CD8-positive, alpha-beta T cell (primary cell): ENCODE measurements at regions of chr17 and their contacts with region 1.

Region 1: GRCh38 chr17:40139566-40140058 is 725 bp upstream of the CASC3 start:
- DNase-seq: peak in 2 of 9 experiments; percentile 3 to 24
- ATAC-seq: peak; percentile 24
- H3K4me3 ChIP-seq: peak overlapping the region; percentile 57 to 71
- H3K4me3 Mint-ChIP-seq: peak overlapping the region; percentile 89
- H3K27ac ChIP-seq: peak overlapping the region; percentile 93 to 94
- H3K27ac Mint-ChIP-seq: peak overlapping the region; percentile 99
- H3K4me1 ChIP-seq: peaks cover 24% of the 10 kb centered on the region
- H3K4me1 Mint-ChIP-seq: peaks cover 42% of the 10 kb centered on the region
- H3K27me3 ChIP-seq: no peaks in the 10 kb centered on the region
- H3K27me3 Mint-ChIP-seq: no peaks in the 10 kb centered on the region
- CTCF ChIP-seq: no peak

Region 2: DNA sequence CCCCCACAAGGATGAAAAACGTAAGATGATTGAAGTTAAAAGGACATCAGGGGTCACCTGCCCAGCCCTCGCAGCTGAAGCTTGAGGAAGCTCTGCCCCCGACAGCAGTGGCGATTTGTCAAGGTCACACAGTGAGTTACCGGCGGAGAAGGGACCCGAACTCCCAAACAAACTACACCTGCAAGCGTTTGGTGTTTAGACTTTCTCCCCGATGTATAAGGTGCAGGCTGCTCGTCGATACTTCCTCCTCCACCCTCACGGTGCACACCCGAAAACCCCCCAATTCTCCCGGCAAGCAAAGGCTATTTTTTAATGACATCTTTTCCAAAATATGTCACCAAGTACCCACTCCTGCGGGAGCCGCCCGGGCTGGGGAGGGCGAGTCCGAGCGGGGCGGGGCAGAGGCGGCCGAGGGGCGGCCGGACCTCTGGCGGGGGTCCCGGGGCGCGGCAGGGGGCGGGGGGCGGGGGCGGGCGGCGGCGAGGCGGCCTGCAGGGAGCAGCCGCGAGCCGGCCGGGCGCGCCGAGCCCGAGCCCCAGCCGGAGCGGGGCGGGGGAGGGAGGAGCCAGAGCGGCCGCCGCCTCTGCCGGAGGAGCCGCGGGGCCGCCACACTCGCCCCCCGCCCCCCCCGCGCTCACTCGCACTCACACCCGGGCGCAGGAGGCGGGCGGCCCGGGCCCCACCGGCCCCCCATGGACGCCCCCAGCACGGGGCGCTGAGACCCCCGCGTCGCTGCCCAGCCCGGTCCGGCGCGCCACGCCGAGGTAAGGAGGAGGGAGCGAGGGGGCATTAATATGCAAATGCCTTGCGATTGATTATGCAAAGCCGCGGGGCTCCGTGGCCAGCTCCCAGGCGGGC is 77.1 kb before region 1 on chr17 and contains the start of gene THRA:
- CTCF ChIA-PET with region 1: no interaction called
- POLR2A ChIA-PET with region 1: interaction called, 8 read pairs
- intact Hi-C with region 1: loop called in 1 of 2 experiments (anchors 2 kb)
- DNase-seq: peak; percentile 47 to 88 (median 71)
- ATAC-seq: peak; percentile 90
- H3K4me3 ChIP-seq: peak within 1 kb of the TSS; percentile 84 to 97
- H3K4me3 Mint-ChIP-seq: peak within 1 kb of the TSS; percentile 91
- H3K27ac ChIP-seq: peak within 1 kb of the TSS; percentile 49 to 64
- H3K27ac Mint-ChIP-seq: peak within 1 kb of the TSS; percentile 85
- H3K4me1 ChIP-seq: peaks cover 48% of the 10 kb centered on the region
- H3K4me1 Mint-ChIP-seq: peaks cover 45% of the 10 kb centered on the region
- H3K27me3 ChIP-seq: no peaks in the 10 kb centered on the region
- H3K27me3 Mint-ChIP-seq: no peaks in the 10 kb centered on the region
- CTCF ChIP-seq: no peak
- total RNA-seq, gene THRA: 34.6 to 35.7 TPM

Region 3: GRCh38 chr17:40098846-40099618 is 40.6 kb before region 1 on chr17:
- CTCF ChIA-PET with region 1: interaction called, 6 read pairs
- POLR2A ChIA-PET with region 1: interaction called, 21 read pairs
- intact Hi-C with region 1: loop called (anchors 1 kb)
- DNase-seq: peak; percentile 97 to 100 (median 99)
- ATAC-seq: peak; percentile 64
- H3K4me3 ChIP-seq: peak overlapping the region; percentile 75 to 90
- H3K4me3 Mint-ChIP-seq: peak overlapping the region; percentile 94
- H3K27ac ChIP-seq: peak overlapping the region; percentile 79 to 98
- H3K27ac Mint-ChIP-seq: peak overlapping the region; percentile 95
- H3K4me1 ChIP-seq: peaks cover 80% of the 10 kb centered on the region
- H3K4me1 Mint-ChIP-seq: peaks cover 88% of the 10 kb centered on the region
- H3K27me3 ChIP-seq: no peaks in the 10 kb centered on the region
- H3K27me3 Mint-ChIP-seq: no peaks in the 10 kb centered on the region
- CTCF ChIP-seq: no peak

Region 4: GRCh38 chr17:40121181-40122135 is 18.2 kb before region 1 on chr17 and contains the start of gene MSL1:
- CTCF ChIA-PET with region 1: interaction called, 20 read pairs
- POLR2A ChIA-PET with region 1: interaction called, 38 read pairs
- intact Hi-C with region 1: loop called (anchors 1 kb)
- DNase-seq: peak; percentile 69 to 92 (median 85)
- ATAC-seq: peak; percentile 65
- H3K4me3 ChIP-seq: peak within 1 kb of the TSS; percentile 75 to 93
- H3K4me3 Mint-ChIP-seq: peak within 1 kb of the TSS; percentile 81
- H3K27ac ChIP-seq: peak within 1 kb of the TSS; percentile 40 to 71
- H3K27ac Mint-ChIP-seq: peak within 1 kb of the TSS; percentile 83
- H3K4me1 ChIP-seq: peaks cover 14% of the 10 kb centered on the region
- H3K4me1 Mint-ChIP-seq: peaks cover 44% of the 10 kb centered on the region
- H3K27me3 ChIP-seq: no peaks in the 10 kb centered on the region
- H3K27me3 Mint-ChIP-seq: no peaks in the 10 kb centered on the region
- CTCF ChIP-seq: no peak
- total RNA-seq, gene MSL1: 43.8 to 46.6 TPM

Region 5: GRCh38 chr17:40151414-40151963 is 11.9 kb after region 1 on chr17:
- CTCF ChIA-PET with region 1: interaction called, 3 read pairs
- POLR2A ChIA-PET with region 1: interaction called, 11 read pairs
- intact Hi-C with region 1: no loop called
- DNase-seq: no peak
- ATAC-seq: no peak
- H3K4me3 ChIP-seq: no peak overlapping the region
- H3K4me3 Mint-ChIP-seq: no peak overlapping the region
- H3K27ac ChIP-seq: no peak overlapping the region
- H3K27ac Mint-ChIP-seq: no peak overlapping the region
- H3K4me1 ChIP-seq: peaks cover 14% of the 10 kb centered on the region
- H3K4me1 Mint-ChIP-seq: peaks cover 58% of the 10 kb centered on the region
- H3K27me3 ChIP-seq: no peaks in the 10 kb centered on the region
- H3K27me3 Mint-ChIP-seq: no peaks in the 10 kb centered on the region
- CTCF ChIP-seq: no peak

Region 6: GRCh38 chr17:40177275-40177874 is 37.8 kb after region 1 on chr17 and contains the start of gene RAPGEFL1:
- CTCF ChIA-PET with region 1: interaction called, 3 read pairs
- POLR2A ChIA-PET with region 1: no interaction called
- intact Hi-C with region 1: loop called (anchors 1 to 5 kb)
- DNase-seq: peak; percentile 70 to 90 (median 81)
- ATAC-seq: peak; percentile 99
- H3K4me3 ChIP-seq: peak within 1 kb of the TSS; percentile 53 to 54
- H3K4me3 Mint-ChIP-seq: peak within 1 kb of the TSS; percentile 72
- H3K27ac ChIP-seq: no peak within 1 kb of the TSS
- H3K27ac Mint-ChIP-seq: no peak within 1 kb of the TSS
- H3K4me1 ChIP-seq: peaks cover 12% of the 10 kb centered on the region
- H3K4me1 Mint-ChIP-seq: peaks cover 11% of the 10 kb centered on the region
- H3K27me3 ChIP-seq: no peaks in the 10 kb centered on the region
- H3K27me3 Mint-ChIP-seq: no peaks in the 10 kb centered on the region
- CTCF ChIP-seq: no peak
- total RNA-seq, gene RAPGEFL1: 8.8 to 9.2 TPM

Region 7: GRCh38 chr17:40219073-40219860 is 79.7 kb after region 1 on chr17 and contains the start of gene WIPF2:
- CTCF ChIA-PET with region 1: interaction called, 3 read pairs
- POLR2A ChIA-PET with region 1: interaction called, 5 read pairs
- intact Hi-C with region 1: loop called in 1 of 2 experiments (anchors 1 kb)
- DNase-seq: peak; percentile 92 to 98 (median 96)
- ATAC-seq: peak; percentile 90
- H3K4me3 ChIP-seq: peak within 1 kb of the TSS; percentile 83 to 87
- H3K4me3 Mint-ChIP-seq: peak within 1 kb of the TSS; percentile 95
- H3K27ac ChIP-seq: peak within 1 kb of the TSS; percentile 99
- H3K27ac Mint-ChIP-seq: peak within 1 kb of the TSS; percentile 100
- H3K4me1 ChIP-seq: peaks cover 8% of the 10 kb centered on the region
- H3K4me1 Mint-ChIP-seq: peaks cover 30% of the 10 kb centered on the region
- H3K27me3 ChIP-seq: no peaks in the 10 kb centered on the region
- H3K27me3 Mint-ChIP-seq: no peaks in the 10 kb centered on the region
- CTCF ChIP-seq: peak; percentile 53
- total RNA-seq, gene WIPF2: 26.8 to 30.8 TPM

Region 8: DNA sequence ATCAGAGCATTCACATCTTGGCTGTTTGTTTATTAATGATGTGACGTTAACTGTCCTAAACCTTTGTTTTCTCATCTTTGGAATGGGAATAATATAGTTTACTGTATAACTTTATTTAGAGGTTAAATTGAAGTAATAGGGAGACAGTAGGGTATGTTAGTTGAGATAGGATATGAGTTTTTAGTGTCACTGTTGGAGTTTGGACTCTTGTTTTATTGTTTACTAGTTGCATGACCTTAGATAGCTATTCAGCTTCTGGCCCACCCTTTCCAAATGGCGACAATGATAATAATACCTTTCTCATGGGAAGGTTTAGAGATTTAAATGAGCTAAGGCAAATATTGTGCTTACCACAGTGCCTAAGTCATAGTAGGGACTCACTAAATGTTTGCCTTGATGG is 119.9 kb after region 1 on chr17:
- CTCF ChIA-PET with region 1: no interaction called
- POLR2A ChIA-PET with region 1: no interaction called
- intact Hi-C with region 1: no loop called
- DNase-seq: no peak
- ATAC-seq: no peak
- H3K4me3 ChIP-seq: no peak overlapping the region
- H3K4me3 Mint-ChIP-seq: no peak overlapping the region
- H3K27ac ChIP-seq: no peak overlapping the region
- H3K27ac Mint-ChIP-seq: peak overlapping the region; percentile 32
- H3K4me1 ChIP-seq: no peaks in the 10 kb centered on the region
- H3K4me1 Mint-ChIP-seq: peaks cover 11% of the 10 kb centered on the region
- H3K27me3 ChIP-seq: no peaks in the 10 kb centered on the region
- H3K27me3 Mint-ChIP-seq: no peaks in the 10 kb centered on the region
- CTCF ChIP-seq: no peak

Region 9: GRCh38 chr17:40314584-40314955 is 175.0 kb after region 1 on chr17:
- CTCF ChIA-PET with region 1: no interaction called
- POLR2A ChIA-PET with region 1: no interaction called
- intact Hi-C with region 1: no loop called
- DNase-seq: peak; percentile 53 to 93 (median 90)
- ATAC-seq: peak; percentile 27
- H3K4me3 ChIP-seq: no peak overlapping the region
- H3K4me3 Mint-ChIP-seq: no peak overlapping the region
- H3K27ac ChIP-seq: no peak overlapping the region
- H3K27ac Mint-ChIP-seq: peak overlapping the region; percentile 77
- H3K4me1 ChIP-seq: peaks cover 77% of the 10 kb centered on the region
- H3K4me1 Mint-ChIP-seq: peaks cover 56% of the 10 kb centered on the region
- H3K27me3 ChIP-seq: no peaks in the 10 kb centered on the region
- H3K27me3 Mint-ChIP-seq: no peaks in the 10 kb centered on the region
- CTCF ChIP-seq: no peak